ENCODE measurements at regions of chr10 and their contacts with region 1.

Region 1: DNA sequence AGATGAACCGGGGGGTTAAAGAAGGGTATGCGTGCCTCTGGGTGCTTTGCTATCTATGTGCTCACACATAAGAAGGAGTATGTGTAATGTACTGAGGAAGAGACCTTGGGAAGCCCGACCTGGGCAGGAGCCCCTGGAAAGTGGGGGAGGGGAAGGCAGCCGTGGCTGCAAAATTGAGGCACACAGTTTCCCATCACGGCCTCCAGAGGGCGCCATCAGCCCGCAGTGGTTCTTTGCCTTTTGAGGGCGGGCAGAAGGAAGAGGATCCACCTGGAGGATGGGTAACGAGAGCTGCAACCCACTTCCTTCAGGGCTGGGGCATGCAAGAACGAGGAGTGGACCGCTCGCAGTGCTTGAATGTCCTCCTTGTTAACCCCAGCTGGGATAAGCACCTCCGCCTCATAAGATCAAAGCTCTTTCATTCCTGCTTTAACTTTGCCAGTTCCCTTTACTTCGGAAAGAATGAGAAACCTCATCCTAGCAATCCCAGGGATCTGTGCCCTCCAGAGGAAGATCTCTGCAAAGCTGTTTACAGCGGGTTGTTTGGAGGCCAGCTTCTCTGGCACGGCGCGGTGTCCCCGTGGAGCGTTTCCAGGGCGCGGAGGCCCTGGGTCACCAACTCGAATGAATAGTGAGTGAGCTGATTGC is 77.9 kb downstream of the PCGF5 start:
- DNase-seq: peak; percentile 87
- H3K4me3 Mint-ChIP-seq: peak overlapping the region; percentile 61
- H3K27ac Mint-ChIP-seq: no peak overlapping the region
- H3K4me1 Mint-ChIP-seq: peaks cover 10% of the 10 kb centered on the region
- H3K27me3 Mint-ChIP-seq: peaks cover 10% of the 10 kb centered on the region

Region 2: GRCh38 chr10:91006001-91006751 is 292.2 kb before region 1 on chr10:
- CTCF ChIA-PET with region 1: interaction called, 15 read pairs
- DNase-seq: peak; percentile 73
- H3K4me3 Mint-ChIP-seq: no peak overlapping the region
- H3K27ac Mint-ChIP-seq: peak overlapping the region; percentile 78
- H3K4me1 Mint-ChIP-seq: peaks cover 33% of the 10 kb centered on the region
- H3K27me3 Mint-ChIP-seq: peaks cover 16% of the 10 kb centered on the region

Region 3: GRCh38 chr10:91257310-91257709 is 41.0 kb before region 1 on chr10:
- CTCF ChIA-PET with region 1: no interaction called
- DNase-seq: no peak
- H3K4me3 Mint-ChIP-seq: no peak overlapping the region
- H3K27ac Mint-ChIP-seq: no peak overlapping the region
- H3K4me1 Mint-ChIP-seq: no peaks in the 10 kb centered on the region
- H3K27me3 Mint-ChIP-seq: no peaks in the 10 kb centered on the region

Region 4: GRCh38 chr10:91360400-91360799 is 62.1 kb after region 1 on chr10:
- CTCF ChIA-PET with region 1: no interaction called
- DNase-seq: no peak
- H3K4me3 Mint-ChIP-seq: no peak overlapping the region
- H3K27ac Mint-ChIP-seq: no peak overlapping the region
- H3K4me1 Mint-ChIP-seq: no peaks in the 10 kb centered on the region
- H3K27me3 Mint-ChIP-seq: peaks cover 19% of the 10 kb centered on the region

Region 5: GRCh38 chr10:91551856-91552255 is 253.5 kb after region 1 on chr10:
- CTCF ChIA-PET with region 1: interaction called, 15 read pairs
- DNase-seq: no peak
- H3K4me3 Mint-ChIP-seq: no peak overlapping the region
- H3K27ac Mint-ChIP-seq: no peak overlapping the region
- H3K4me1 Mint-ChIP-seq: no peaks in the 10 kb centered on the region
- H3K27me3 Mint-ChIP-seq: peaks cover 3% of the 10 kb centered on the region

Region 6: DNA sequence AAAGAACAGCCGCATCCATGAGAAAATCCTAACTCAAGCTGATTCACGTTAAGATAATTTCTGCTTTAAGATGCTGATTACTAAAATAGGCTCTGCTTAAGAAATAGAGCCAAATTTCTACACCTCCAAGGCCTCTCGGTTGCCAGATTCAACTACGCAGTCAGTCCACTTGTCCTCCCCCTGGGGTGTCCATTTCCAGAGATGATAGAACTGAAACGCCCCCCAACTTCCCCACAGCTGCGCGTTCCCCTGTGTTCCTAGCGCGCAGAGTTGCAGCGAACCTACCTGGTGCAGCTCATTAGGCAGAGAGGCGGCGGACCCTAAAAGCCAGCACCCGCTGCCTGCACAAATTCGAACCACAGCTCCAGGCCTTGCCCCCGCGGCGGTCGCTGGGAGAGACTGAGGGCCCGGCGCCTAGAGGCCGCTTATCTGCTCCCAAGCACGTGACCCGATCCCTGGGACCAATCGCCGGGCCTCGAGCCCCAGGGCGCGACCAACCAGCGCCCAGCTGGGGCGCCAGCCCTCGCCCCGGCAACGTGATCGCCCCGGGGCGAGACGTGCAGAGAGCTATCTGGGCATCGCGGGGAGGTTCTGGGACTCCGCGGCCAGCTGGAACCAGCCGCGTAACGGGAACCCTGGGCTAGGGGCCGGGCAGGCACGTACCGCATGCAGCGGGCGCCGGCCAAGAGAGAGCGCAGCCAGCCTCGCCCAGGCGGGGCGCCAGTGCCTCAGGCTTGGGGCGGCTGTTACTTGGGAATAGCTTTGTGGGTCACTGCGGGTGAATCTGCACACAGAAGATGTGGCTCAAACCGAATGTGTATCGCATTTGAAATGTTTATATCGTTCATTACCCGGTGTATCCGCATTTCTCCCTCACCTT is 334.6 kb after region 1 on chr10 and contains the start of gene PPP1R3C:
- CTCF ChIA-PET with region 1: interaction called, 82 read pairs
- DNase-seq: peak; percentile 65
- H3K4me3 Mint-ChIP-seq: peak within 1 kb of the TSS; percentile 59
- H3K27ac Mint-ChIP-seq: no peak within 1 kb of the TSS
- H3K4me1 Mint-ChIP-seq: peaks cover 9% of the 10 kb centered on the region
- H3K27me3 Mint-ChIP-seq: peaks cover 57% of the 10 kb centered on the region

Region 7: GRCh38 chr10:91694170-91694794 is 395.9 kb after region 1 on chr10:
- CTCF ChIA-PET with region 1: interaction called, 21 read pairs
- DNase-seq: peak; percentile 22
- H3K4me3 Mint-ChIP-seq: no peak overlapping the region
- H3K27ac Mint-ChIP-seq: no peak overlapping the region
- H3K4me1 Mint-ChIP-seq: peaks cover 5% of the 10 kb centered on the region
- H3K27me3 Mint-ChIP-seq: no peaks in the 10 kb centered on the region

Measured in activated naive CD4-positive, alpha-beta T cell treated with anti-CD3 and anti-CD28 coated beads, Interleukin-2, amount 10 ng/mL, durations not matched to agents 7 days and 5 days (primary cell).